Activated B cell treated with CpG ODN at 0.5 μM for 24 hours (primary cell): ENCODE measurements at regions of chr1 and their contacts with region 1.

Region 1: DNA sequence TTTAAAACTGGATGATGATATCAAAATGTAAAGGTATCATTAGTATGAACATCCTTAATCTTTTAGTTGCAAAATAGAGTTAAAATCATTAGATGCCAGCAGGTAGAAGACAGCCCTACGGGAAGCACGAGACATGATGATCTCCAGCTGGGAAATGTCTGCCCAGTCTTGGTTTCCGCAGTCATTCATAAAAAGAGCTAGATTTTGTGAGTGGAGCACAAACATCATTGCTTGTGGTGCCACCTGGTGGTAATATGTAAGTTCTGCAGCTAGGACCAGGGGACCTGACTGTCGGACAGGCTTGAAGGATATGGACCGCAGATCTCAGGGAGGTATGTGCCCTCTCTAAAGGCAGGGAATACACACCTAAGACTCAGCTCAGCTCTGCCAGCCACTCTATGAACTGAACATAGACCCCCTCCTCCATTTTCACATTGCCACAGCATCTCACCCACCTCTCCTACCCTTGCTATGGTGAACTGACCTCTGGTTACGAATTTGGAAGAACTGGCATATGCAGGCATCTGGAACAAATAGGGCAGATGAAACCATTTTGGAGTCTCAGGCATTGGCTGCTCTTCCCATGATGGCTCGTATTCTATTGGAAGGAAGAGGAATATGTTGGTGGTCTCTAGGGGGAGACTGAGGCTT is 9.2 kb downstream of the FCMR start:
- DNase-seq: no peak
- ATAC-seq: peak; percentile 54
- H3K4me3 Mint-ChIP-seq: peak overlapping the region; percentile 42
- H3K27ac Mint-ChIP-seq: no peak overlapping the region
- H3K4me1 Mint-ChIP-seq: peaks cover 93% of the 10 kb centered on the region
- H3K27me3 Mint-ChIP-seq: no peaks in the 10 kb centered on the region
- CTCF ChIP-seq: peak; percentile 72

Region 2: DNA sequence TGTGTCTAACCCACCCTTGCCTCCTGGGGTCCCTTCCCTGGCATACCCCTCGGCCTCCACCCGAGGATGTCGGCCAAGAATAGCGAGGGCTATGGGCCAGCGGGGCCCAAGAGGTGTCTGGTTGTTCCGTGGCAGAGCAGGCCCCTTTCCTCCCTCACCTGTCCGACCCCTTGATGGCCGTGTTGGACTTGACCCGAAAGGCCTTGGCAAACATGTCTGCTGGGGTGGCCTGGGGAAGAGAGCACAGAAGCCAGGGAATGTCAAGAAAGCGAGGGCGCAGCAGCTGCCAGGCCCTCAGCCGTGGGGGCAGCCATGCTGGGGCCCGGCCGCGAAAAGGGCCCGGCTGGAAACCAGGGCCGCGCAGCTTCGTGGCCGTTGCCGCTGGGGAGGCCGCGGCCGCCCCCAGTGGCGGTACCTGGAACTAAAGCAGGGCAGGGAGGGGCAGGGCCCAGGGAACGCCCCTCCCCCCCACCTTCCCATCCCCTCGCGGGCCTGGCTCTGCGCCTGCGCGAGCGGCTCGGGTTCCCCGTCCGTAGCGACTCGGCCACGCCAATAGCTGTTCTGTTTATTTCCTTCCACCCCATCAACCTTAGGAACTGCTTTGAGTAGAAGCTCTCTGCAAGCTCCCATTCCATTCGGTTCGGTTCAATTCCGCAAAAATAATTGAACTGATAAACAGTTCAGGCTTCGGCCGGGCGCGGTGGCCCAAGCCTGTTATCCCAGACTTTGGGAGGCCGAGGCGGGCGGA is 300.3 kb before region 1 on chr1 and contains the start of gene EIF2D:
- CTCF ChIA-PET with region 1: interaction called, 3 read pairs
- POLR2A ChIA-PET with region 1: no interaction called
- intact Hi-C with region 1: loop called (anchors 5 kb)
- DNase-seq: peak; percentile 95
- ATAC-seq: peak; percentile 98
- H3K4me3 Mint-ChIP-seq: peak within 1 kb of the TSS; percentile 96
- H3K27ac Mint-ChIP-seq: peak within 1 kb of the TSS; percentile 97
- H3K4me1 Mint-ChIP-seq: peaks cover 30% of the 10 kb centered on the region
- H3K27me3 Mint-ChIP-seq: no peaks in the 10 kb centered on the region
- CTCF ChIP-seq: peak; percentile 72
- total RNA-seq, gene EIF2D: 61.2 and 65.4 TPM in 2 replicates

Region 3: GRCh38 chr1:206658264-206658980 is 254.1 kb before region 1 on chr1:
- CTCF ChIA-PET with region 1: interaction called, 16 read pairs
- POLR2A ChIA-PET with region 1: interaction called, 3 read pairs
- intact Hi-C with region 1: loop called (anchors 1 kb)
- DNase-seq: peak; percentile 52
- ATAC-seq: peak; percentile 85
- H3K4me3 Mint-ChIP-seq: peak overlapping the region; percentile 58
- H3K27ac Mint-ChIP-seq: no peak overlapping the region
- H3K4me1 Mint-ChIP-seq: peaks cover 15% of the 10 kb centered on the region
- H3K27me3 Mint-ChIP-seq: peaks cover 4% of the 10 kb centered on the region
- CTCF ChIP-seq: no peak

Region 4: GRCh38 chr1:206713070-206713469 is 199.5 kb before region 1 on chr1:
- CTCF ChIA-PET with region 1: no interaction called
- POLR2A ChIA-PET with region 1: no interaction called
- intact Hi-C with region 1: no loop called
- DNase-seq: no peak
- ATAC-seq: no peak
- H3K4me3 Mint-ChIP-seq: no peak overlapping the region
- H3K27ac Mint-ChIP-seq: no peak overlapping the region
- H3K4me1 Mint-ChIP-seq: peaks cover 91% of the 10 kb centered on the region
- H3K27me3 Mint-ChIP-seq: no peaks in the 10 kb centered on the region
- CTCF ChIP-seq: no peak

Region 5: GRCh38 chr1:206797534-206798383 is 114.8 kb before region 1 on chr1:
- CTCF ChIA-PET with region 1: interaction called, 7 read pairs
- POLR2A ChIA-PET with region 1: no interaction called
- intact Hi-C with region 1: loop called (anchors 5 kb)
- DNase-seq: no peak
- ATAC-seq: peak; percentile 25
- H3K4me3 Mint-ChIP-seq: no peak overlapping the region
- H3K27ac Mint-ChIP-seq: no peak overlapping the region
- H3K4me1 Mint-ChIP-seq: peaks cover 73% of the 10 kb centered on the region
- H3K27me3 Mint-ChIP-seq: no peaks in the 10 kb centered on the region
- CTCF ChIP-seq: no peak

Region 6: DNA sequence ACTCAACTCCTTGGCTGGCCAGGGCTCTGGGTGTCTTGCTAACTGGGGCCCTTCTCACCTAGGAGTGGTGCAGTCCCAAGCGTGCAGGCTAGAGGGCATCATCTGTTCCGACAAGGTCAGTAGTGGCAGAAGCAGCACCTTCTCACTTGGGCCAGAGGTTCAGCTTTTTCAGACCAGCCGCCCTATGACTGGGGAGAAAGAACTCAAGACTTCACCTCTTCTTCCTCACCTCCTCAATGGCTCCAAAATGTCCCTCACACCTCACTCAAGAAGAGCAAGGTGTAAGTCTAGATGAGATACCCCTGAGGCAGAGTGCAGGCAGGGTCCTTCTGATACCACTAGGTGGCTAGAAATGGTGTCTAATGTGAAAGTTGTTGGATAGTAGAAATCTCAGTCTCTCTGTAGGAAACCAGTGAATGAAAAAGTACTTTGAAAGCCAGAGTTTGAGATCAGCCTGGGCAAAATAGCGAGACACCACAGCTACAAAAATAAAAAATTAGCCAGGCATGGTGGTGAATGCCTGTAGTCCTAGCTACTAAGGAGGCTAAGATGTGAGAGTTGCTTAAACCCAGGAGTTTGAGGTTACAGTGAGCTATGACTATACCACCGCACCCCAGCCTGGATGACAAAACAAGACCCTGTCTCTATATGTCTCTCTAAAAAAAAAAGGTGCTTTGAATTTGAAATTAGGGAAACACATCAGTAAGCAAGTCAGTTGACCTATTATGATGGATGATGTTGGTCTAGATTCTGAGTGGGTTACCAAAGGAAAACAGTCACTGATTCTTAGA is 55.7 kb before region 1 on chr1:
- CTCF ChIA-PET with region 1: interaction called, 23 read pairs
- POLR2A ChIA-PET with region 1: no interaction called
- intact Hi-C with region 1: loop called (anchors 2 kb)
- DNase-seq: no peak
- ATAC-seq: peak; percentile 78
- H3K4me3 Mint-ChIP-seq: no peak overlapping the region
- H3K27ac Mint-ChIP-seq: no peak overlapping the region
- H3K4me1 Mint-ChIP-seq: peaks cover 6% of the 10 kb centered on the region
- H3K27me3 Mint-ChIP-seq: peaks cover 12% of the 10 kb centered on the region
- CTCF ChIP-seq: no peak

Region 7: DNA sequence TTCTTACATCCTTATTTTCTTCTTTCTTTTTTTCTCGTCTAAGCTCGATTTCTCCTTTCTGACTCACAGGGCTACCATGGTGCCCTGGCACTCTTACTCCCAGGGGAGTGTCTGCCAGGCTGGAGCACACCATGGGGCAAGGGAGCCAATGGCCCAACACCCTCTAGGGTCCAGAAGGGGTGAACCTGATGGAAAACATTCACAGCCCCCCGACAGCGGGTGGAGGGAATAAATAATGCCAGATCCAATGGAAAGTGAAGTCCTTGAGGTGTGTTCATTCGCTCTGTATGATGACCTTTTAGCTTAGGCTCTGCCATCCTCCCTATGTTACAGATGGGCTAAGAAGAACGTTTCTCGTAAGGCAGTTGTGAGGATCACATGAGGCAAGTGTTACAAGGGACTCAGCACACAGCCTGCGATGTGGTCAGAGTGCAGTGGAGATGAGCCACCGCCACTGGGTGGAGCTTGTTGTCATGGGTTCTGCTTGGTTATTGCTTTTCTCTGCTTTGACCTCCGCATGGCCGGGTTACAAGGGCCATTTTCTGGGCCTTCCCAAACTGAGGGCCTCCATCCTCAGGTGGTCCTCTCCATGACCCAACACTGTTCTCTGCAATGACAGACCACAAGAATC is 12.7 kb after region 1 on chr1:
- CTCF ChIA-PET with region 1: interaction called, 383 read pairs
- POLR2A ChIA-PET with region 1: interaction called, 267 read pairs
- intact Hi-C with region 1: loop called (anchors 1 kb)
- DNase-seq: peak; percentile 63
- ATAC-seq: peak; percentile 55
- H3K4me3 Mint-ChIP-seq: no peak overlapping the region
- H3K27ac Mint-ChIP-seq: no peak overlapping the region
- H3K4me1 Mint-ChIP-seq: peaks cover 33% of the 10 kb centered on the region
- H3K27me3 Mint-ChIP-seq: no peaks in the 10 kb centered on the region
- CTCF ChIP-seq: no peak

Region 8: GRCh38 chr1:206935491-206936067 is 23.0 kb after region 1 on chr1:
- CTCF ChIA-PET with region 1: interaction called, 383 read pairs
- POLR2A ChIA-PET with region 1: interaction called, 267 read pairs
- intact Hi-C with region 1: loop called (anchors 1 kb)
- DNase-seq: peak; percentile 41
- ATAC-seq: no peak
- H3K4me3 Mint-ChIP-seq: no peak overlapping the region
- H3K27ac Mint-ChIP-seq: no peak overlapping the region
- H3K4me1 Mint-ChIP-seq: peaks cover 34% of the 10 kb centered on the region
- H3K27me3 Mint-ChIP-seq: no peaks in the 10 kb centered on the region
- CTCF ChIP-seq: no peak